GM13976 (cell line): ENCODE measurements at regions of chr20 and their contacts with region 1.

Region 1: DNA sequence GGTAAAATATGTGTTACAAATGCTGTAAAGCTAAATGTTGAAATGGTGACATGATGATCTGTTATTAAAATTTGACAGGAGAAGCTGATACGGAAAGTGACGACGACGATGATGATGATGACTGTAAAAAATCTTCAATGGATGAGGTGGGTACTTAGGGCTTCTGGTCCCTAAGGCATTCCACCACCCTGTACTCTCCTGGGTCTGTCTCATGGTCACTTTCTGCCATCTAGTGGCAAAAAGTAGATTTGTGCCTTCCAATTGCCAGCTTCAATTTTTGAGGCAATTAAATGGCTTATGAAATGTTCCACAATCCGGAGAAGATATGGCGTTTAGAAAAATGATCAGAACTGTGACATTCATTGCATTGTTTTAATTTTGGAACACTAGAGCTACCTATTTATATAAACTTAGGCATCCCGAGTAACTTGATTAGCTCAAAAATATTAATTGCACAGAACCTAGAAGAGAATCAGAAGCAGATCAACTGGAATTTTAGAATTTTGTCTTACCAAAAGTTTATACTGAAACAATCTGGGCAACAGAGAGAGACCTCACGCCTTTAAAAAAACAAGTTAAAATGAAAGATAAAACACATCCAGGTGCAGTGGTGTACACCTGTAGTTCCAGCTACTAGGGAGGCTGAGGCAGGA is 346.5 kb upstream of the PLCB4 start:
- DNase-seq: no peak
- CTCF ChIP-seq: peak; percentile 62

Region 2: DNA sequence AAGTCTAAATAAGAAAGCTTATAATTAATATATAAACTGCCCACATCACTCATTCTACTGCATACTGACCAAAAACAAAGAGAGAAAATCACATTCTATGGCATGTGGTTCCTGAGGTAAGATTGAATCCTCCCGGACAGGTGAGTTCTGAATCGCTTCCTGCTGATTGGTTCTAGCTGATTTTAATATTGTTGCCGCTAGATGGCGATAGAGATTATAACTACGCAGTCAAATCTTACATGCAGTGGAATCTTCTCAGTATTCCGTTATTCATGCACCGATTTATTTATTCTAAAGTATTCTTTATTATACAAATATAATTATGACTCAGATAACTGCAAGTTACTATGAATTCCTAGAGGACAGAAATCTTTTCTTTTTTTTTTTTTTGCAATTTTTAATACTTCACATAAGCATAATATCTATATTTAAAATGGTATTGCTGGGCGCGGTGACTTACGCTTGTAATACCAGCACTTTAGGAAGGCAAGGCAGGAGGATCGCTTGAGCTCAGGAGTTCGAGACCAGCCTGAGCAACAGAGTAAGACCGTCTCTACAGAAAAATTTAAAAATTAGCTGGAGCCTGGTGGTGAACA is 678.6 kb before region 1 on chr20:
- in situ Hi-C with region 1: loop called (anchors 10 kb)
- DNase-seq: peak; percentile 57
- CTCF ChIP-seq: peak; percentile 57

Region 3: DNA sequence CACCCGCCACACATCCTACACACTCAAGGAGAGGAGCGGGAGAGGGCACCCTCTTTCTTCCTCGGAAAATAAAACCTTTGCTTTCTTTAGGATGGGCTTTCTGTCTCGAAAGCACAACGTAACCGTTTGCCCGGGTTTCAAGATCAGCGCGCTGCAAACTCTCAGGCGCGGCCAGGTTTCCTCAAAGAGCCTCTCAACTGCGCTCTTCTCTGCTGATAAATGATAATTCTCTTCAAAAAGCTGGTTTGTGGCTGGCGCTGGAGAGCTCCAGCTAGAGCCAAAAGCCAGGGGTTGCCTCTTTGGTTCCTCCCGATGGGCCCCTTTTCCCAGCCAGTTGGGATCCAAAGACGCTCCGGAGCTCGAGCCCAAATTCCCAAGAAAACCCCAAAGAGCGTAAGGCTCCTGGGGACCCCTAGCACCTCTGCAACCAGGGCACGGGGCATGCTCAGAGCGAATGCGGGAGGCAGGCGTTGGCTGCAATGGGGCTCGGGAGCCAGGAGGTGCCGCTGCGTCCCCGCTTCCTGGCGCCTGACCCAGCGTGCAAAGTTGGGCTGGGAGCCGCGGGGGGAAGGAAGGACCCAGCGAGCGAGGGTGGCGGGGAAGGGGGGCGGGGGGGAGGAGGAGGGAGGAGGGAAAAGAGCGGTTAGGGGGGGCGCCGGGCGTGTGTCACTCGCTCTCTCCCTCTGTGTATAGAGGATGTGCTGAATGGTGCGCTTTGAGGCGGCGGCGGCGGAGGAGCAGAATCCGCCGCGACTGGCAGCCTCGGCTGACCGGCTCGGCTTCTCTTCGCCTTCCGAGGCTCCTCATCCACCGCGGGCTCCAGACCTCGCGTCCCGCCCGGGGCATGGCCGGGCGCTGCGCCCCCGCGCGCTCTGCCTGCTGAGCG is 590.6 kb before region 1 on chr20 and contains the start of gene PLCB1:
- in situ Hi-C with region 1: loop called (anchors 25 kb)
- DNase-seq: peak; percentile 88
- CTCF ChIP-seq: peak; percentile 98

Region 4: DNA sequence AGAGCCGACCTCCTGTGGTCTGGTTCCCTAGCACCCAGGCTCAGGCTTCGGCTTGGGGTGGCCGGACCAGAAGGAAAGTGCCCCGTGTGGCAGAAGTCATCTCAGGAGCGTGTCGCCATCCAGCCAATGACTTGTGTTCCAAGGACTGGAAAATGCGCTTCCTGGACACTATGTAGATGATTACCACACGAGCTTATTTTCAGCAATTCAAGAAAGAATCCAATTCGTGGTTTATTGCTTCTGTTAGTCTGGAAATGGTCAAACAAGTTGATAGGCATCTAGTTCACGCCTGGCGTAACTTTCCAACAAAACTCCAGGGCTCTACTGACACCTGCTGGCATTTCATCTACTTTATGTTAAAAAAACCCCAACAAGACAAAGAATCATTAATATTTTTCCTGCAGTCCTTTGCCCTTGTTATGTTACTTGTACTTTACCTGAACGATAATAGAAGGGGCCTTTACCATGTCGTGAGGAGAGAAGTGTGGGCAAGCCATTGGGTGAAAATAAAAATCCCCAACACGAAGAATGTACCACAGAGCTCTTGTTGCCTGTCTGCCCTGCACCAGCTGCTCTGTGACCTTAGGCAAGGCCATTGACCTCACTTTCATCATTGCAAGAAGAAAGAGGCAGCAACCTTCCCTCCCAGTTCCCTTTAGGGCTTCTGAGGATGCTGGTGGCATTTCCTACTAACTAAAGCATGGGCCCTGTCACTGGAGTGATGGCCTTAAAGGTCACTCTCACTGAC is 637.3 kb after region 1 on chr20:
- in situ Hi-C with region 1: no loop called
- DNase-seq: no peak
- CTCF ChIP-seq: no peak